Gastrocnemius medialis (tissue), 4 donors: ENCODE measurements at regions of chr12 and their contacts with region 1.

Region 1: GRCh38 chr12:105523164-105524015 is 192.9 kb downstream of the C12orf75 start:
- DNase-seq: peak; percentile 34 to 46
- ATAC-seq: peak; percentile 85
- H3K4me3 ChIP-seq: no peak overlapping the region
- H3K27ac ChIP-seq: no peak overlapping the region
- H3K4me1 ChIP-seq: peaks cover 8 to 17% of the 10 kb centered on the region in 2 donors
- H3K27me3 ChIP-seq: no peaks in the 10 kb centered on the region
- CTCF ChIP-seq: no peak
- POLR2A ChIP-seq: no peak

Region 2: GRCh38 chr12:105289114-105289904 is 234.1 kb before region 1 on chr12:
- in situ Hi-C with region 1: no loop called
- intact Hi-C with region 1: no loop called
- DNase-seq: no peak
- ATAC-seq: no peak
- H3K4me3 ChIP-seq: no peak overlapping the region
- H3K27ac ChIP-seq: no peak overlapping the region
- H3K4me1 ChIP-seq: no peaks in the 10 kb centered on the region
- H3K27me3 ChIP-seq: no peaks in the 10 kb centered on the region
- CTCF ChIP-seq: no peak
- POLR2A ChIP-seq: no peak

Region 3: GRCh38 chr12:105485321-105485910 is 38.0 kb before region 1 on chr12:
- in situ Hi-C with region 1: no loop called
- intact Hi-C with region 1: loop called (anchors 5 kb)
- DNase-seq: peak; percentile 68 to 77
- ATAC-seq: peak; percentile 93 to 96
- H3K4me3 ChIP-seq: no peak overlapping the region
- H3K27ac ChIP-seq: peak overlapping the region; percentile 44 to 79 (median 59)
- H3K4me1 ChIP-seq: peaks cover 14 to 15% of the 10 kb centered on the region in 2 donors
- H3K27me3 ChIP-seq: no peaks in the 10 kb centered on the region
- CTCF ChIP-seq: no peak
- POLR2A ChIP-seq: no peak